Mammary epithelial cell (primary cell): ENCODE measurements at regions of chr11 and their contacts with region 1.

Region 1: GRCh38 chr11:66677599-66678375 is at the start of gene RBM4B:
- DNase-seq: peak; percentile 89
- H3K4me3 ChIP-seq: peak within 1 kb of the TSS; percentile 51 to 84 (median 75)
- H3K27ac ChIP-seq: peak within 1 kb of the TSS; percentile 93
- H3K4me1 ChIP-seq: peaks cover 18% of the 10 kb centered on the region
- H3K27me3 ChIP-seq: no peaks in the 10 kb centered on the region
- CTCF ChIP-seq: no peak
- total RNA-seq, gene RBM4B: 12.2 to 15.3 TPM

Region 2: DNA sequence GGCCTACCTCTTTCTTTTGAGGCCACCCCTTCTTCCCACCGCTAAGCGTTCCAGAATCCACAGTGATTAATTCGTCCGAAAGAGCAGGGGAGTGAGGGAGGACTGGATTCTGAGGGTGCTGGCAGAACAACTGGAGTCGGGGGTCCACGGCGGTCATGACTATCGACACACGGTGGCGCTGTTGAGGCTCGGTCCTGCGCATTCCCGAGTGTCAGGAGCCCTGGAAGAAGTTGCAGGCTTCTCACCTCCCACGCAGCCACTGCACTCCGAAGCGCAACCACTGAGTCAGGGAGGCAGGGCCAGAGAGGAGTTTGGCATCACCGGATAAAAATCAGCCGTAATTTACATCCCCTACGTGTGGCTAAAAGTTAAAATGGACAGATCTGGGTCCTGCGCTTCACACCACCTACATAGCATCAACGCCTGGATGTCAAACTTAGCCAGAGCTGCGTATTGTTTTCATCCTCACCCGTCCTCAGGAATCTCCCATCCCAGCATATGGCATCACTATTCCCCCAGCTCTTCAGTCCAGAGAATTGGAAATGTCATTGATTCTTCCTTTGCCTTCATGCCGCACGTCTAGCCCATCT is 98.7 kb before region 1 on chr11:
- CTCF ChIA-PET with region 1: no interaction called
- dilution Hi-C with region 1: no loop called
- in situ Hi-C with region 1: no loop called
- intact Hi-C with region 1: loop called (anchors 1 kb)
- DNase-seq: peak; percentile 56
- H3K4me3 ChIP-seq: no peak overlapping the region
- H3K27ac ChIP-seq: no peak overlapping the region
- H3K4me1 ChIP-seq: no peaks in the 10 kb centered on the region
- H3K27me3 ChIP-seq: no peaks in the 10 kb centered on the region
- CTCF ChIP-seq: peak; percentile 68 to 81

Region 3: DNA sequence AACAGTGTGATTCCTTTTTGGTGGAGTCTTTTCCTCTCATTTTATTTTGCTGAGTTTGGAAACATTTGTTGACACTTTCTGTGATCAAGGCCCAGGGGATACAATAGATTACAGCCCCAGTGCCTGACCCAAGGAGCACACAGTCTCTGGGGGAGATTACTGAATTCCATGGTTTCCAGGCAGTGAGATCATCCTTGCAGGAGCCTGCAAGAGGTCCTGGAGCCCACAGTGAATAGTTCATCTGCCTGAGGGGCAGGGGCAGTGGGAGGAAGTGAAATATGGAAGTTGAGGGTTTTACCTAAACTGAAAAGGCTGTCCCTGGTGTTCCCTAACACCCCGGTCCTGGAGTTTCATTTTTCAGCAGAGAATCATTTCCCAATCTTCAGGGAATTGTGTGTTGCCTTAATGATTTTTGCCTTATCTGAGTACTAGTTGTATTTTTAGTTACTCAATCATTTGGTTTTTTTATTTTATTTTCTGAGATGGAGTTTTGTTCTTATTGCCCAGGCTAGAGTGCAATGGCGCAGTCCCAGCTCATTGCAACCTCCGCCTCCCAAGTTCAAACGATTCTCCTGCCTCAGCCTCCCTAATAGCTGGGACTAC is 77.1 kb before region 1 on chr11:
- CTCF ChIA-PET with region 1: no interaction called
- dilution Hi-C with region 1: loop called (anchors 5 kb)
- in situ Hi-C with region 1: no loop called
- intact Hi-C with region 1: no loop called
- DNase-seq: no peak
- H3K4me3 ChIP-seq: no peak overlapping the region
- H3K27ac ChIP-seq: no peak overlapping the region
- H3K4me1 ChIP-seq: peaks cover 9% of the 10 kb centered on the region
- H3K27me3 ChIP-seq: no peaks in the 10 kb centered on the region
- CTCF ChIP-seq: no peak

Region 4: DNA sequence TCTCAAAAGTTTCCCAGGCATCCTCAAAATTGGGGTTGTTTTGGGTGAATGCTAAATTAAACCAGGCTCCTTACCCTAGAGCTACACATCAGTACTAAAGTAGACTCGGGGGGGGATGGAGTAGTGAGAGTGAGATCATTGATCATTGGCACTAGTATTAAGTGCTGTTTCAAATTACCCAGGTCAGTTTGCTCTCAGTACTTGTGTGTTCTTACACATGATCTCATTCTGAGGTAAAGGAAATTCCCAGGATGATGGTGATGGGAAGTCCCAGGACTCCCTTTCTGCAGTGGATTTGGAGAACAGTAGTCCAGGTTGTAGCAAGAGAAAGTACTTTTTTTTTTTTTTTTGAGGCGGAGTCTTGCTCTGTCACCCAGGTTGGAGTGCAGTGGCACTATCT is 26.8 kb before region 1 on chr11:
- CTCF ChIA-PET with region 1: no interaction called
- dilution Hi-C with region 1: no loop called
- in situ Hi-C with region 1: no loop called
- intact Hi-C with region 1: no loop called
- DNase-seq: peak; percentile 72
- H3K4me3 ChIP-seq: no peak overlapping the region
- H3K27ac ChIP-seq: no peak overlapping the region
- H3K4me1 ChIP-seq: peaks cover 8% of the 10 kb centered on the region
- H3K27me3 ChIP-seq: no peaks in the 10 kb centered on the region
- CTCF ChIP-seq: no peak

Region 5: GRCh38 chr11:66762088-66762487 is 84.3 kb after region 1 on chr11:
- CTCF ChIA-PET with region 1: no interaction called
- dilution Hi-C with region 1: no loop called
- in situ Hi-C with region 1: no loop called
- intact Hi-C with region 1: no loop called
- DNase-seq: no peak
- H3K4me3 ChIP-seq: no peak overlapping the region
- H3K27ac ChIP-seq: no peak overlapping the region
- H3K4me1 ChIP-seq: no peaks in the 10 kb centered on the region
- H3K27me3 ChIP-seq: no peaks in the 10 kb centered on the region
- CTCF ChIP-seq: no peak